BJ (cell line): ENCODE measurements at regions of chr11 and their contacts with region 1.

Region 1: GRCh38 chr11:46020084-46020599 is 97.7 kb downstream of the LARGE2 start:
- DNase-seq: no peak
- H3K4me3 ChIP-seq: no peak overlapping the region
- H3K27me3 ChIP-seq: no peaks in the 10 kb centered on the region
- CTCF ChIP-seq: no peak

Region 2: GRCh38 chr11:46006418-46007070 is 13.6 kb before region 1 on chr11:
- CTCF ChIA-PET with region 1: interaction called, 13 read pairs
- POLR2A ChIA-PET with region 1: no interaction called
- DNase-seq: peak; percentile 31
- H3K4me3 ChIP-seq: no peak overlapping the region
- H3K27me3 ChIP-seq: no peaks in the 10 kb centered on the region
- CTCF ChIP-seq: peak; percentile 77

Region 3: GRCh38 chr11:46050003-46050461 is 29.9 kb after region 1 on chr11:
- CTCF ChIA-PET with region 1: no interaction called
- POLR2A ChIA-PET with region 1: no interaction called
- DNase-seq: peak; percentile 44
- H3K4me3 ChIP-seq: no peak overlapping the region
- H3K27me3 ChIP-seq: no peaks in the 10 kb centered on the region
- CTCF ChIP-seq: no peak